ENCODE measurements at regions of chr1 and their contacts with region 1.

Region 1: DNA sequence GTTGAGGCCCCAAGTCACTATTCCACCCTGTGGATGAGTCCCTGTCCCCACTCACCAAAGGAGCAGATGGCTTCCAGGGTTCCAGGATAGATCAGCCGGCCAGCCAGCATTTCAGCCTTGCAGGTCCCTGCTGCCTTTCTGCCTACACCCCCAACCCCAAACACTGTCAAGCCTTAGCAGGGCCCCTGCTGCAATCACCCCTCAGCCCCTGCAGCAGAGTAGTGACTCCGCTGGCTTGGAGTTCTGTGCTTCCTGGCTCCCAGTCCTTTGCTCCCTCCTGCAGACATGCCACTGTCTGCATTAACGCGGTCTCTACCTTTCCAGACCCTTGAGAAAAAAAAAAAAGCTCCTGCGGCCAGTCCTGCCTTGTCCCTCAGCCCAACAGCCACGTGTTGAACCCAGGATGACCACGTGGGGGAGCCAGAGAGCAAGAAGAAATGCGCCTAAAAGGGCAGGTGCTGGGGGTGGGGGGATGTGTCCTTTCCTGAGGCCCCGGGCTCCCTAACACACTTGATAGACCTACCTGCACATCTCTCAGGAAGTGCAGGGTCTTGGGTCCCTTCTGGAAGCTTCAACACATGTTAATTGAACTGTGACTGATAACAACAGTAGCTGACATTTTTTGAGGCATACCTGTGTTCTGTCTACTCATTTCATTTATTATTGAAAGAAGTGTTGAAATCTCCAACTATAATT is 37.4 kb downstream of the RASSF5 start:
- DNase-seq: peak; percentile 42 to 88
- H3K4me3 ChIP-seq: no peak overlapping the region
- H3K4me1 ChIP-seq: no peaks in the 10 kb centered on the region
- H3K27me3 ChIP-seq: no peaks in the 10 kb centered on the region

Region 2: DNA sequence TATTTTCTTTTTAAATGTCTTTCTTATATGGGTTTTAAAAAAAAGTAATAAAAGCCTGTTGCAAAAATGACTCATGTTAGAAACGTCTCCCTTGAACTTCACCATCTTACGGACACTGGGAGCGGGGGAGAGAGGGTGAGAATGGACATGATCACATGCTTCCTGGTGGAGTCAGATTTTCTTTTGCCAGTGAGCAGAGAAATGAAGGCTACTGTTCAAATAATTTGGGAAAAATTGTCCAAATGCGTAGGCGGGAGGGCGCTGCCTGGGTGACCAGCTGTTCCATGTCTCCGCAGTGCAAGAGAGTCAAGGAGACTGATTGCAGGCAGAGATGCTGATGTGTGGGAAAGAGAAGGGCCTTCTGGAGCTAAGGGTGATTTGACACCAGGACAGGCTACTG is 44.5 kb after region 1 on chr1:
- in situ Hi-C with region 1: loop called (anchors 5 kb)
- DNase-seq: no peak
- H3K4me3 ChIP-seq: no peak overlapping the region
- H3K4me1 ChIP-seq: no peaks in the 10 kb centered on the region
- H3K27me3 ChIP-seq: no peaks in the 10 kb centered on the region

Region 3: GRCh38 chr1:206725109-206725963 is 180.6 kb after region 1 on chr1:
- in situ Hi-C with region 1: no loop called
- DNase-seq: peak; percentile 41 to 76
- H3K4me3 ChIP-seq: no peak overlapping the region
- H3K4me1 ChIP-seq: no peaks in the 10 kb centered on the region
- H3K27me3 ChIP-seq: no peaks in the 10 kb centered on the region

Measured in HAP-1 (cell line).